ENCODE measurements at regions of chr4 and their contacts with region 1.

Region 1: GRCh38 chr4:147866532-147867271 is 134.8 kb downstream of the ARHGAP10 start:
- DNase-seq: peak; percentile 92
- H3K4me3 ChIP-seq: no peak overlapping the region
- H3K27ac ChIP-seq: no peak overlapping the region
- H3K4me1 ChIP-seq: peaks cover 9% of the 10 kb centered on the region
- H3K27me3 ChIP-seq: no peaks in the 10 kb centered on the region
- CTCF ChIP-seq: peak; percentile 92 to 99
- POLR2A ChIP-seq: no peak

Region 2: GRCh38 chr4:147447786-147448185 is 418.9 kb before region 1 on chr4:
- CTCF ChIA-PET with region 1: no interaction called
- POLR2A ChIA-PET with region 1: no interaction called
- dilution Hi-C with region 1: no loop called
- intact Hi-C with region 1: no loop called
- DNase-seq: no peak
- H3K4me3 ChIP-seq: no peak overlapping the region
- H3K27ac ChIP-seq: no peak overlapping the region
- H3K4me1 ChIP-seq: no peaks in the 10 kb centered on the region
- H3K27me3 ChIP-seq: peaks cover 0 to 3% of the 10 kb centered on the region in 2 experiments
- CTCF ChIP-seq: no peak
- POLR2A ChIP-seq: no peak

Region 3: GRCh38 chr4:147596981-147597380 is 269.7 kb before region 1 on chr4:
- CTCF ChIA-PET with region 1: interaction called, 146 read pairs
- POLR2A ChIA-PET with region 1: interaction called, 3 read pairs
- dilution Hi-C with region 1: no loop called
- intact Hi-C with region 1: no loop called
- DNase-seq: peak; percentile 76
- H3K4me3 ChIP-seq: no peak overlapping the region
- H3K27ac ChIP-seq: no peak overlapping the region
- H3K4me1 ChIP-seq: peaks cover 4% of the 10 kb centered on the region
- H3K27me3 ChIP-seq: peaks cover 0 to 3% of the 10 kb centered on the region in 2 experiments
- CTCF ChIP-seq: no peak
- POLR2A ChIP-seq: no peak

Region 4: DNA sequence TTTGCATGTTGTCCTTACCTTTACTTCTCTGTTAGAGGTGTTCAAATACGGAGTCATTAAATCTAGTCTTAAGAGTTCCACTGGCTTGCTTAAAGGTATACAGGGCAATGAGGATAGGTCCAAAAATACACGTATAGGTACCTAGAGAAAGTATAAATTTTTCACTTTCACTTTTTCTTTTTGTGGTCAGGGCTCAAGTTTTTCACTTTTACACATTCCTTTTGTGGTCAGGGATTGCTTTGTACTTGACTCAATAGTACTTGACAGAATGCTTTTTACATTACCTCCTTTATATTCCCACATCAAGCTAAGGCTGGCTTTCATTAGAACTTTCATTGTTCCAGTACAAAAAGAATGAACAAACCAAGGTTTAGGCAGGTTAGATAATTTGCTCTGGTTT is 227.8 kb before region 1 on chr4:
- CTCF ChIA-PET with region 1: interaction called, 65 read pairs
- POLR2A ChIA-PET with region 1: no interaction called
- dilution Hi-C with region 1: no loop called
- intact Hi-C with region 1: loop called (anchors 5 kb)
- DNase-seq: no peak
- H3K4me3 ChIP-seq: no peak overlapping the region
- H3K27ac ChIP-seq: no peak overlapping the region
- H3K4me1 ChIP-seq: no peaks in the 10 kb centered on the region
- H3K27me3 ChIP-seq: no peaks in the 10 kb centered on the region
- CTCF ChIP-seq: no peak
- POLR2A ChIP-seq: no peak

Region 5: GRCh38 chr4:147689067-147689466 is 177.6 kb before region 1 on chr4:
- CTCF ChIA-PET with region 1: interaction called, 57 read pairs
- POLR2A ChIA-PET with region 1: interaction called, 6 read pairs
- dilution Hi-C with region 1: no loop called
- intact Hi-C with region 1: loop called (anchors 1 kb)
- DNase-seq: no peak
- H3K4me3 ChIP-seq: no peak overlapping the region
- H3K27ac ChIP-seq: no peak overlapping the region
- H3K4me1 ChIP-seq: peaks cover 7% of the 10 kb centered on the region
- H3K27me3 ChIP-seq: peaks cover 0 to 2% of the 10 kb centered on the region in 2 experiments
- CTCF ChIP-seq: no peak
- POLR2A ChIP-seq: no peak

Region 6: DNA sequence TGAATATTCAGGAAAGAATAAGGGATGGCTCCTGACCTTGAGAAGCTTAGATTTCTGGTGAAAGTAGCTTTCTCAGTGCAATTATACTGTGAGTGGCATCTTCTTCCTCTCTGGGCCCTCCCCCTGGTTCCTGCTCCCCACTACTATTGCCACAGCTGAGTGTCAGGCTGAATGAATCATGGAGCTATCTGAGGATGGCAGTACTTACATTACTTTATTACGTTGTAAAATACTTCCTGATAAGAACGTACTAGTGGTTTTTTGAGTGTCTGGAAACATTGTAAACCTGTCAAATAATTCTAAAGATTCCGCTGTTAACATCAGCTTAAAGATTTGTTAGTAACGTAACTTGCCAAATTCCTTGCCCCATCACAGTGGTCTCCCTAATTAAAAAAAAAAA is 98.6 kb before region 1 on chr4:
- CTCF ChIA-PET with region 1: interaction called, 59 read pairs
- POLR2A ChIA-PET with region 1: interaction called, 3 read pairs
- dilution Hi-C with region 1: no loop called
- intact Hi-C with region 1: loop called (anchors 1 kb)
- DNase-seq: peak; percentile 95
- H3K4me3 ChIP-seq: no peak overlapping the region
- H3K27ac ChIP-seq: peak overlapping the region; percentile 62
- H3K4me1 ChIP-seq: peaks cover 51% of the 10 kb centered on the region
- H3K27me3 ChIP-seq: no peaks in the 10 kb centered on the region
- CTCF ChIP-seq: no peak
- POLR2A ChIP-seq: no peak

Region 7: DNA sequence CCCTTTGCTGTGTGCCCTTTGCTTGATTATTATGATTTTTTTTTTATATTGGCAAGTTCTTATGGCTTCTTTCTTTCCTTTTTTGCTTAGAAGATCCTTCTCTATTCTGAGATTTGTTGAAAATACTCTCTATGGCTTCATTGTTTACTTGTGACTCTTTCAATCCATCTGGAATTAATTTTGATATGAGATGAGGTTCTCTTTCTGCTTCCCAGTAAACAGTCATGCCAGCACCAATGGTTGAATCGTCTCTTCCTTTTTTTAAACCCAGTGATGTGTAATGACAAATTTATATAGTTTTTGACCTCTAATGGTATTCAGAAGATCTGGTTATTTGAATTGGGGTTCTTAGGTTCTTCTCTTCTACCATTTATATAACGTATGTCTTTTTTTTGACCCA is 13.0 kb before region 1 on chr4:
- CTCF ChIA-PET with region 1: interaction called, 50 read pairs
- POLR2A ChIA-PET with region 1: no interaction called
- dilution Hi-C with region 1: no loop called
- intact Hi-C with region 1: no loop called
- DNase-seq: no peak
- H3K4me3 ChIP-seq: no peak overlapping the region
- H3K27ac ChIP-seq: no peak overlapping the region
- H3K4me1 ChIP-seq: peaks cover 18% of the 10 kb centered on the region
- H3K27me3 ChIP-seq: no peaks in the 10 kb centered on the region
- CTCF ChIP-seq: no peak
- POLR2A ChIP-seq: no peak

Measured in endothelial cell of umbilical vein (primary cell).